Activated CD4-positive, alpha-beta T cell treated with anti-CD3 and anti-CD28 coated beads for 36 hours (primary cell): ENCODE measurements at regions of chr3 and their contacts with region 1.

Region 1: GRCh38 chr3:5194341-5195159 is 7.0 kb downstream of the EDEM1 start:
- DNase-seq: peak; percentile 62
- ATAC-seq: peak; percentile 34
- H3K4me3 Mint-ChIP-seq: peak overlapping the region; percentile 68
- H3K27ac Mint-ChIP-seq: peak overlapping the region; percentile 98
- H3K4me1 Mint-ChIP-seq: peaks cover 86% of the 10 kb centered on the region
- H3K27me3 Mint-ChIP-seq: no peaks in the 10 kb centered on the region

Region 2: DNA sequence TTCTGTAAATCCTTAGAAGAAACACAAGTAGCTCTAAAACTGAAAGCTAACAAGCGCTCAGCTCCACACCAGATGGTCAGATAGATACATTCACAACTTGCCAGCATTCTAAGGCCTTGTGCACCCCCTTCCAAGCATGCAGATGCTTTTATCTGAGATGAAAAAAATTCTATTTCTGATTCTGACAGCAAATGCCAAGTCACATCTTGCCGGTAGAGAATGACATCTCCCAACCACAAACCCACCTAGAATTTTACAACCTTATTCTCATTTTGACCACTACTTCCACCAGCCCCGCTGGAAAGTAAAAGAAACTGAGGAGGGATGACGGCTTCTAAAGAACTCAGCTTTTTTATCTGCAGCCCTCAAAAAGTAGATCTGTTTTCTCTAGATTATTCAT is 785.1 kb before region 1 on chr3:
- CTCF ChIA-PET with region 1: no interaction called
- POLR2A ChIA-PET with region 1: no interaction called
- intact Hi-C with region 1: loop called in 1 of 2 experiments (anchors 5 kb)
- DNase-seq: peak; percentile 43
- ATAC-seq: peak; percentile 67
- H3K4me3 Mint-ChIP-seq: peak overlapping the region; percentile 4
- H3K27ac Mint-ChIP-seq: peak overlapping the region; percentile 87
- H3K4me1 Mint-ChIP-seq: peaks cover 40% of the 10 kb centered on the region
- H3K27me3 Mint-ChIP-seq: no peaks in the 10 kb centered on the region

Region 3: DNA sequence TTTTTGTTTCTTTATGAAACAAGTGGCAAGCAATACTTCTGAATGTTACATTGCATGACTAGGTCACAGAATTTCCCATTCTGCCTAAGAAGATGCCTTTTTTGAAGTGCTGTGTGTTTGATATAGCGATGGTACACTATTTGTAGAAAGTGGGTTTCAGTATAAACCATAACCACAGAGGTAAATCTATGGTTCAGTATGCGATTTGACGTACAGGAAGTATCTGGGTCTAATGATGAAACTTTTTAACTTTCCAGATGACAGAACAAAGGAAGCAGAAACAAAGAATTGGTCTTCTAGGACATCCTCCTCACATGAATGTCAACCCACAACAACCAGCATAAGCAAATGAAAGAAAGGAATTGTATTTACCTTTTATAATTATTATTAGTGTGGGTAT is 348.7 kb before region 1 on chr3:
- CTCF ChIA-PET with region 1: interaction called, 3 read pairs
- POLR2A ChIA-PET with region 1: interaction called, 5 read pairs
- intact Hi-C with region 1: loop called (anchors 2 to 5 kb)
- DNase-seq: no peak
- ATAC-seq: peak; percentile 58
- H3K4me3 Mint-ChIP-seq: peak overlapping the region; percentile 16
- H3K27ac Mint-ChIP-seq: peak overlapping the region; percentile 90
- H3K4me1 Mint-ChIP-seq: peaks cover 94% of the 10 kb centered on the region
- H3K27me3 Mint-ChIP-seq: no peaks in the 10 kb centered on the region

Region 4: DNA sequence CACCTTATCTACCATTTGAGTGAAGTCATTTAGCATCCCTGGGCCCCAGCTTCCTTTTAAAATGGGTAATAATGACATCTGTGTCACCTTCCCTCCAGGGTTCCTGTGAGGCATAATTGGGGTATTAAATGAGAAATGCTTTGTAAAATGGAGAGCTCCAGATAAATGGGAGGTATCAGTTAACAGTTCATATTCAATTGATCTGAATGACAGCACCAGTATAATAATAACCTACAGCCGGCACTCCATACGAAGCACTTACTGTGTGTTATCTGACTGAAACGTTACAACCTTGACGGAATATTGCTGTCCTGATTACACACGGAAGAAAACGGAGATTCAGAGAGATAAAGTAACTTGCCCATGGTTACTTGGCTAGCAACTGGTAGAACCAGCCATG is 161.7 kb before region 1 on chr3:
- CTCF ChIA-PET with region 1: no interaction called
- POLR2A ChIA-PET with region 1: no interaction called
- intact Hi-C with region 1: no loop called
- DNase-seq: no peak
- ATAC-seq: no peak
- H3K4me3 Mint-ChIP-seq: no peak overlapping the region
- H3K27ac Mint-ChIP-seq: no peak overlapping the region
- H3K4me1 Mint-ChIP-seq: peaks cover 16% of the 10 kb centered on the region
- H3K27me3 Mint-ChIP-seq: peaks cover 7% of the 10 kb centered on the region

Region 5: GRCh38 chr3:5078151-5078550 is 116.4 kb before region 1 on chr3:
- CTCF ChIA-PET with region 1: no interaction called
- POLR2A ChIA-PET with region 1: no interaction called
- intact Hi-C with region 1: no loop called
- DNase-seq: no peak
- ATAC-seq: no peak
- H3K4me3 Mint-ChIP-seq: no peak overlapping the region
- H3K27ac Mint-ChIP-seq: no peak overlapping the region
- H3K4me1 Mint-ChIP-seq: no peaks in the 10 kb centered on the region
- H3K27me3 Mint-ChIP-seq: peaks cover 3% of the 10 kb centered on the region

Region 6: DNA sequence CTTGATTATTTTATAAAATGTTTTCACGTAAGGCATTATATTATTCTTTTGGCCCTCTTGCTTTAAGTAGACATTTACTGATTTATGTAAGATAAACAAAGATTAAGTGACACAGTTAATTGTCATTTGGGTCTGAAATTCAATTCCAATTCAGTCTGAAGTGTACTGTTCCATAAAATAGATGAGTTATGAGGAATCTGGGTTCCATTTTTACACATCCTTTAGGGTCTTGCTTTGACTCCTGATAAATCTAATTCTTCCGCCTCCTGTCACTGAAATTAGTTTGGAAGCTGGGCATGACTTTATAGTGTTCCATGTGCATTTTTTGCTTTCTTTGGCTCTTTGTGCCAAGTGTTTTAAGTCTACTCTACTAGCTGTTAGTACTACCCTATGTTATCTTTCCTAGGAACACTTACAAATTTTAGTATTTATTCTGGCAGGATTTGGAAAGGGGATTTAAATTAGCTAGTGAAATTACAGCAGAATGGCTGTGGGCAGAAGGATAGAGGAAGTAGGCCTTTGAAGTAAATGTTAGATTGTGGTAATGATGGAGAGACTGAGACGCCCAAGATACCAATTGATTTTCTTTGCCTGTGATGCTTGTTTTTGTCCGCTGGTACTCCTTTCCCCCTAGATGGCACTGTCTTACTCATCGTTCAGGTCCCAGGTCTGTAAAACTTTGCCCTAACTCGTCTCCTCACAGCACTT is 58.2 kb before region 1 on chr3:
- CTCF ChIA-PET with region 1: interaction called, 15 read pairs
- POLR2A ChIA-PET with region 1: no interaction called
- intact Hi-C with region 1: loop called in 1 of 2 experiments (anchors 1 kb)
- DNase-seq: peak; percentile 42
- ATAC-seq: peak; percentile 94
- H3K4me3 Mint-ChIP-seq: no peak overlapping the region
- H3K27ac Mint-ChIP-seq: peak overlapping the region; percentile 76
- H3K4me1 Mint-ChIP-seq: peaks cover 63% of the 10 kb centered on the region
- H3K27me3 Mint-ChIP-seq: no peaks in the 10 kb centered on the region

Region 7: DNA sequence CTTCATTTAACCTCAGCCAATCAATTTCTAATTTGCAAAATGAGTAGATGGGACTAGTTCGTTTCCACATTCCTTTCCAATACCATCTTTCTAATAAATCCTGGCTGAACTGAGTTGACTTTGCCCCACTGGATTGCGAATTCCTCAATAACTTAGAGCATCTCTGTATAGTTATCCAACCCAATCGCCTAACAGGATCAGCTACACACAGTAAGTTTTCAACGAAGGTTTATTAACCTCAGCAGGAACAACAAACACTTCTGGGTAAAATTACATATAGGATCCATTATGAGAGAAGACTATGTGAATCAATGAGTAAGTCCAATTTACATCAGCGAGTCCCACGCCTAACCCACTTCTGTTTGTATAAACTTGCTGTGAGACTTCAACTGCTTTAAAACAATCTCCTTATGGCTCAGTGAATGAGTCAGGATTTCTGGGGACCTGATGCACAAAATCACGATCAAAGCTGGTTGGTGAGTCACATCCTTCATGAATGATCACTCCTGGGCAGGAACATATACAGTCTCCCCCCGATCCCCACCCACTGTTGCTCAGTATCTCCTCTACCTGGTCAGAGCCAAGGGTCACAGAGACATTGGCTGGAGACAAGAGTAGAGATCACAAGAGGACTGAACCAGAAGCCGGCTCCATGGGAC is 135.7 kb after region 1 on chr3:
- CTCF ChIA-PET with region 1: no interaction called
- POLR2A ChIA-PET with region 1: interaction called, 3 read pairs
- intact Hi-C with region 1: loop called (anchors 1 to 5 kb)
- DNase-seq: peak; percentile 71
- ATAC-seq: peak; percentile 88
- H3K4me3 Mint-ChIP-seq: peak overlapping the region; percentile 22
- H3K27ac Mint-ChIP-seq: peak overlapping the region; percentile 77
- H3K4me1 Mint-ChIP-seq: peaks cover 46% of the 10 kb centered on the region
- H3K27me3 Mint-ChIP-seq: peaks cover 5% of the 10 kb centered on the region